ENCODE measurements at regions of chr2 and their contacts with region 1.

Region 1: GRCh38 chr2:170122883-170123584 is 54.9 kb upstream of the MYO3B start:
- DNase-seq: peak; percentile 91
- H3K4me3 ChIP-seq: no peak overlapping the region
- H3K27ac ChIP-seq: peak overlapping the region; percentile 75
- H3K4me1 ChIP-seq: peaks cover 29% of the 10 kb centered on the region
- H3K27me3 ChIP-seq: no peaks in the 10 kb centered on the region
- CTCF ChIP-seq: no peak

Region 2: GRCh38 chr2:170146784-170147183 is 23.8 kb after region 1 on chr2:
- CTCF ChIA-PET with region 1: no interaction called
- dilution Hi-C with region 1: no loop called
- in situ Hi-C with region 1: no loop called
- intact Hi-C with region 1: loop called (anchors 1 kb)
- DNase-seq: no peak
- H3K4me3 ChIP-seq: no peak overlapping the region
- H3K27ac ChIP-seq: peak overlapping the region; percentile 79
- H3K4me1 ChIP-seq: peaks cover 23% of the 10 kb centered on the region
- H3K27me3 ChIP-seq: no peaks in the 10 kb centered on the region
- CTCF ChIP-seq: no peak

Region 3: GRCh38 chr2:170162271-170162632 is 39.2 kb after region 1 on chr2:
- CTCF ChIA-PET with region 1: no interaction called
- dilution Hi-C with region 1: no loop called
- in situ Hi-C with region 1: no loop called
- intact Hi-C with region 1: loop called (anchors 1 kb)
- DNase-seq: peak; percentile 87
- H3K4me3 ChIP-seq: no peak overlapping the region
- H3K27ac ChIP-seq: peak overlapping the region; percentile 46
- H3K4me1 ChIP-seq: peaks cover 19% of the 10 kb centered on the region
- H3K27me3 ChIP-seq: no peaks in the 10 kb centered on the region
- CTCF ChIP-seq: no peak

Region 4: DNA sequence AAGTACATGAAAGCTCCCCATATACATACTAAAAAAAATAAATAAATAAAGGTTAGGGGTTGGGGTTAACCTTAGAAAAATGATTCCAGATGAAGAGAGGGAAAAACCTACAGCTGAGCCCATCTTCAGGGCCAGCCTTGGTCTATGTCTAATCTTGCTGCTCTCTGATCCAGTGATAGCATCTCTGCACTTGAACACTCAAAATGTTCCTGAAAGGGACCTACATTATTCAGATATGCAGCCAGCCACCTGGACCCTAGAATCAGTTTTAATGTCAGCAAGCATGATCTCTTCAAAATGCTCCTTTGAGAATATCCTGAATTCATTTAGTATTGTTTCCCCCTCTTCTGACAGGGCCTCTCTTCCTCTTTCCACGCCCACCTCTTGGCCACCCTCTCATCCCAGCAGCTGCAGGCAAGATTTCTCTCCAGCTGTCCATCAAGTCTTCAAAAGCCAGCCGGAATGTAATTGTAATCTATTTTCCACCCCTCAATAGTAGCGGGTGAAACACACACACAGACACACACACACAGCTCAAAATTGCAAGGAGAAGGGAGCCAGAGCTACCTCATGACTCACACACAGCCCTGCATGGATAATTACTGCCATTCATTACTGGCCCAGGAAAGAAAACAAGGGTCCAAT is 190.4 kb after region 1 on chr2:
- CTCF ChIA-PET with region 1: no interaction called
- dilution Hi-C with region 1: no loop called
- in situ Hi-C with region 1: no loop called
- intact Hi-C with region 1: loop called (anchors 10 kb)
- DNase-seq: peak; percentile 35
- H3K4me3 ChIP-seq: no peak overlapping the region
- H3K27ac ChIP-seq: no peak overlapping the region
- H3K4me1 ChIP-seq: no peaks in the 10 kb centered on the region
- H3K27me3 ChIP-seq: no peaks in the 10 kb centered on the region
- CTCF ChIP-seq: no peak